Activated T-helper 2 cell treated with anti-CD3 and anti-CD28 coated beads, Interferon-gamma antibody, Interleukin-2, Interleukin-4, amounts not matched to agents 10 μg/mL and 5 μg/mL and 100 μg/mL, durations not matched to agents 14 hours and 24 hours and 36 hours (primary cell): ENCODE measurements at regions of chr12 and their contacts with region 1.

Region 1: GRCh38 chr12:121214855-121215745 is 5.2 kb downstream of the P2RX4 start:
- DNase-seq: no peak
- H3K4me3 Mint-ChIP-seq: peak overlapping the region; percentile 18
- H3K27ac Mint-ChIP-seq: peak overlapping the region; percentile 75
- H3K4me1 Mint-ChIP-seq: peaks cover 42% of the 10 kb centered on the region
- H3K27me3 Mint-ChIP-seq: no peaks in the 10 kb centered on the region

Region 2: GRCh38 chr12:121144416-121144914 is 70.6 kb before region 1 on chr12:
- intact Hi-C with region 1: loop called (anchors 2 kb)
- DNase-seq: no peak
- H3K4me3 Mint-ChIP-seq: peak overlapping the region; percentile 34
- H3K27ac Mint-ChIP-seq: peak overlapping the region; percentile 76
- H3K4me1 Mint-ChIP-seq: peaks cover 29% of the 10 kb centered on the region
- H3K27me3 Mint-ChIP-seq: no peaks in the 10 kb centered on the region

Region 3: GRCh38 chr12:121154793-121155375 is 60.2 kb before region 1 on chr12:
- intact Hi-C with region 1: no loop called
- DNase-seq: no peak
- H3K4me3 Mint-ChIP-seq: no peak overlapping the region
- H3K27ac Mint-ChIP-seq: no peak overlapping the region
- H3K4me1 Mint-ChIP-seq: no peaks in the 10 kb centered on the region
- H3K27me3 Mint-ChIP-seq: no peaks in the 10 kb centered on the region